ENCODE measurements at regions of chr6 and their contacts with region 1.

Region 1: DNA sequence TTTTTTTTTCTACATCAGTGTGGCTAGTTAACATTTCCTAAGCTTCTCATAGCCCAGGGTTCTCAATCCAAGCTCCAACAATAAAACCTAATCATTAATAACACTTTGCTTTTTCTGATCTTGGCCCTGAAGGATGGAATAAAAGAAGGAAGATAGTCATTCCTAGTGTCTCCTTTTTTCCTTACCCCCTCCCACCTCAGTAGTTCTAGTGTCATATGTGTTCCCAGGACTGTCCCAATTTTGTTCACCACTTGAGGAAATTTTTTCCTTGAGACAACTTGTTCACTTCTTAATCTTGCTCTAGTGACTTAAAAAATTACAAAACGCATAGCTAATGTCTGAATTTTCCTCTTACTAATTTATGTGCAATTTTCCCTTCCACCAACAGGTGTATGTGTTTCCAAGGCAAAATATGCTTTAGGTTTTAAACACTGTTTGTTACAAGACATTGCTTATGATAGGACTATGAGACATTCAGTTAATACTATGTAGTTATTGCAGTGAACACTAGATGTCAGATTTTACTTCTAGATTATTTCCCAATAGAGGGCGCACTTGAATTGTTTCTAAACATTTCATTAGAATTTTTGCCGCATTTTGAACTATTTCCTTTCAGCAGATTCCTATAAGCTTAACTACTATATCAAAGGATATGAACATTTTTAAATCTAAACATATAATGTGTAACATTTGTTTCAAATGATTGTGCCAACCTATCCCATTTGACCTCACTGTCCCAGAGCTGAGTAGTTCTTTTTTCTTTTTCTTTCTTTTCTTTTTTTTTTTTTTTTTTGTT is 18.5 kb upstream of the C6orf141 start:
- DNase-seq: no peak
- H3K4me3 Mint-ChIP-seq: no peak overlapping the region
- H3K27ac Mint-ChIP-seq: no peak overlapping the region
- H3K4me1 Mint-ChIP-seq: no peaks in the 10 kb centered on the region
- H3K27me3 Mint-ChIP-seq: peaks cover 13% of the 10 kb centered on the region

Region 2: GRCh38 chr6:49384904-49385303 is 147.1 kb before region 1 on chr6:
- intact Hi-C with region 1: no loop called
- DNase-seq: no peak
- H3K4me3 Mint-ChIP-seq: no peak overlapping the region
- H3K27ac Mint-ChIP-seq: no peak overlapping the region
- H3K4me1 Mint-ChIP-seq: no peaks in the 10 kb centered on the region
- H3K27me3 Mint-ChIP-seq: no peaks in the 10 kb centered on the region

Region 3: GRCh38 chr6:49606696-49607390 is 74.9 kb after region 1 on chr6:
- intact Hi-C with region 1: loop called (anchors 1 kb)
- DNase-seq: no peak
- H3K4me3 Mint-ChIP-seq: no peak overlapping the region
- H3K27ac Mint-ChIP-seq: no peak overlapping the region
- H3K4me1 Mint-ChIP-seq: no peaks in the 10 kb centered on the region
- H3K27me3 Mint-ChIP-seq: peaks cover 4% of the 10 kb centered on the region

Region 4: DNA sequence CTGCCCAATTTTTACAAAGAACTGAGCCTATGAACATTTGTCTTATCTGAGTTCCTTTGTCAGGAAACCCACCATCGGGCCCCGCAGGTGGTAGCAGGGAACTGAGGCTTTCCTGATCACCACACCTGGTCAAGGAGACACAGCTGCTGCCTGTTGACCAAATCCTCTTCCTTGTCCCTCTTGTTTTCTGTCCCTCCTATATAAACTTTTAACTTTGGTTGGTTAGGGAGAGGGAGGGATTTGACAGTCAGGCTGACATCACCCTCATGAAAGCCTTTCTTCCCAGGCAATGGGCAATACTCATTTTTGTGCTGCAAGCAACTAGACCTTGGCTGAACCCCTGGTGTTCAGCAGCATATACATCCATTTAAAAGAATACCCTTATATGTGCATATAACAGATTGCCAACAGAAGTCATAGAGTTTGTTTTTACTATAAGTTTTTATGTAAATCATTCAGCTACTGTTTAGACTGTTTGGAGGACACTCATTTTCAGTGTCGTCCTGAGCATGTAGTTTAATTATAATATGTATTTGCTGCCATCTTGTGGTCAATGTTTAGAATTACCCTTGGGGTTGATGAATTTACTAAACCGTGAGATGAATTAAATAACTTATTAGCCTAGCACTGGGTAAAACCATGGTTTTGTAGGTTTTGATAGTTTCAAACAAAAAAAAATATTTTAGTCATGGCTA is 317.4 kb after region 1 on chr6:
- intact Hi-C with region 1: loop called (anchors 1 kb)
- DNase-seq: no peak
- H3K4me3 Mint-ChIP-seq: no peak overlapping the region
- H3K27ac Mint-ChIP-seq: no peak overlapping the region
- H3K4me1 Mint-ChIP-seq: no peaks in the 10 kb centered on the region
- H3K27me3 Mint-ChIP-seq: no peaks in the 10 kb centered on the region

Measured in activated T-helper 2 cell treated with anti-CD3 and anti-CD28 coated beads, Interferon-gamma antibody, Interleukin-2, Interleukin-4, amounts not matched to agents 10 μg/mL and 5 μg/mL and 100 μg/mL, durations not matched to agents 14 hours and 24 hours and 36 hours (primary cell).